ENCODE measurements at regions of chr6 and their contacts with region 1.

Region 1: GRCh38 chr6:46491628-46492547 is 639 bp upstream of the RCAN2 start:
- DNase-seq: peak; percentile 6
- ATAC-seq: peak; percentile 95
- H3K4me3 ChIP-seq: peak overlapping the region; percentile 50 to 75 (median 73)
- H3K27ac ChIP-seq: no peak overlapping the region
- H3K4me1 ChIP-seq: peaks cover 5% of the 10 kb centered on the region
- H3K27me3 ChIP-seq: peaks cover 4 to 33% of the 10 kb centered on the region in 2 experiments; a peak in 4 of 5 replicates
- CTCF ChIP-seq: peak; percentile 72
- EP300 ChIP-seq: no peak
- POLR2A ChIP-seq: no peak
- RAD21 ChIP-seq: peak; percentile 48; the same call in 1 of the 2 replicates

Region 2: DNA sequence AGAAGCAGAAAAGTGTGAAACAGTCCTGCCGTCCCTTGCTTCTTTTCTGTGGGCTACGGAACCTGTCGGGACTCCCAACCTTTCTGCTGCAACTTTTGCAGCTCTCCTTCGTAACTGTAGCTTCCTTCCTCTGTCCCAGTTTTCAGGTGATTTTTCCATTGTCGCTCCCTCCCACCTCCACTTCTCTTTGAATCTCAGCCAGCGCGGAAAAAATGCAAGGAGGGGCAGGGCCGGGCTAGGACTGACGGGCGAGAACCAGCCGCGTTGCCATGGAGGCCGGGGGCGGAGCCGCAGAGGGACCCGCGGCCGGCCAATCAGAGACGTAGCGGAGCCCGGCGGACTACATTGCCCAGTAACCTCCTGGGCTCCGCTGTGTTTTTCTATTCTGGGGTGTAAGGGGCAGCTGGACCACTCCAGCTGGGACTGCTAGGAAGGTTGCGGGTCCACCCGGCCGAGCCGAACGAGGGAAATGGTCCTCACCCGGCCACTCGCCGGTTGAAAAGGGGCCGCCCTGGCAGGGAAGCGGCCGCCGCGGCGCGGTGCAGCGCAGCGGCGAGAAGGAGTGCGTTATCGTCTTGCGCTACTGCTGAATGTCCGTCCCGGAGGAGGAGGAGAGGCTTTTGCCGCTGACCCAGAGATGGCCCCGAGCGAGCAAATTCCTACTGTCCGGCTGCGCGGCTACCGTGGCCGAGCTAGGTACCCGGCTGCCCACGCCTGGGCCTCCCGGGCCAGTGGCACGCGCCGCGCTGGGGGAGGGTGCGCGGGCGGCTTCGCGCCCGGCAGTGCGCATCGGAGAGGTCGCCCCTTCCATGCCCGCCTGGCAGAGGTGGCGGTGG is 160.9 kb after region 1 on chr6 and contains the starts of genes CYP39A1 and SLC25A27:
- CTCF ChIA-PET with region 1: no interaction called
- POLR2A ChIA-PET with region 1: no interaction called
- in situ Hi-C with region 1: no loop called
- intact Hi-C with region 1: loop called (anchors 10 kb)
- DNase-seq: peak; percentile 79
- ATAC-seq: peak; percentile 99
- H3K4me3 ChIP-seq: peak within 1 kb of the TSS; percentile 69 to 79 (median 70); a peak in 5 of 6 replicates
- H3K27ac ChIP-seq: no peak within 1 kb of the TSS
- H3K4me1 ChIP-seq: peaks cover 20% of the 10 kb centered on the region
- H3K27me3 ChIP-seq: peaks cover 0 to 25% of the 10 kb centered on the region in 2 experiments; a peak in 2 of 5 replicates
- CTCF ChIP-seq: no peak
- EP300 ChIP-seq: no peak
- POLR2A ChIP-seq: no peak
- RAD21 ChIP-seq: no peak
- total RNA-seq, gene CYP39A1: not detected in 2 replicates
- total RNA-seq, gene SLC25A27: 0.32 and 0.46 TPM in 2 replicates